AG04449 (cell line): ENCODE measurements at regions of chr1 and their contacts with region 1.

Region 1: GRCh38 chr1:218330043-218330623 is 15.0 kb upstream of the TGFB2 start:
- DNase-seq: no peak
- H3K4me3 ChIP-seq: no peak overlapping the region
- CTCF ChIP-seq: peak; percentile 22

Region 2: DNA sequence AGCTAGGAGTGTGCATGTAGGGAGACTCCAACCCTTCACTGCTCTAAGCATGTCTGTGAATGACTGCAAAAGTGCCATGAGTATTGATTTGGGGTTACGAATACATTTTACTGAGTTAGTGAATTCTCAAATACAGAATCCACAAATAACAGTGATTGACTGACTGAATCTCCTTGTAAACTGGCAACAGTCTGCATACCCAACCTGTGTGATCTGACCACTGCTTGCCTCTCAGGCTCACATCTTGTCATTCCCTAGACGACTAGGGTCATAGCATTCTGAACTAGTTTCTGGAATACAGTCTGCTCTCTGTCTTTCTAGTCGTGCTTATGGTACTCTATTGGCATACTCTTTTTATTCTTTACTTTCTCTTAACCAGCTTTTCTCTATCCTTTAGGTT is 37.6 kb before region 1 on chr1:
- CTCF ChIA-PET with region 1: no interaction called
- POLR2A ChIA-PET with region 1: no interaction called
- DNase-seq: no peak
- H3K4me3 ChIP-seq: no peak overlapping the region
- CTCF ChIP-seq: no peak

Region 3: DNA sequence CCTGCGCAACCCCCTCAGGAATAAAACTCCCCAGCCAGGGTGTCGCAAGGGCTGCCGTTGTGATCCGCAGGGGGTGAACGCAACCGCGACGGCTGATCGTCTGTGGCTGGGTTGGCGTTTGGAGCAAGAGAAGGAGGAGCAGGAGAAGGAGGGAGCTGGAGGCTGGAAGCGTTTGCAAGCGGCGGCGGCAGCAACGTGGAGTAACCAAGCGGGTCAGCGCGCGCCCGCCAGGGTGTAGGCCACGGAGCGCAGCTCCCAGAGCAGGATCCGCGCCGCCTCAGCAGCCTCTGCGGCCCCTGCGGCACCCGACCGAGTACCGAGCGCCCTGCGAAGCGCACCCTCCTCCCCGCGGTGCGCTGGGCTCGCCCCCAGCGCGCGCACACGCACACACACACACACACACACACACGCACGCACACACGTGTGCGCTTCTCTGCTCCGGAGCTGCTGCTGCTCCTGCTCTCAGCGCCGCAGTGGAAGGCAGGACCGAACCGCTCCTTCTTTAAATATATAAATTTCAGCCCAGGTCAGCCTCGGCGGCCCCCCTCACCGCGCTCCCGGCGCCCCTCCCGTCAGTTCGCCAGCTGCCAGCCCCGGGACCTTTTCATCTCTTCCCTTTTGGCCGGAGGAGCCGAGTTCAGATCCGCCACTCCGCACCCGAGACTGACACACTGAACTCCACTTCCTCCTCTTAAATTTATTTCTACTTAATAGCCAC is 15.7 kb after region 1 on chr1:
- CTCF ChIA-PET with region 1: interaction called, 22 read pairs
- POLR2A ChIA-PET with region 1: interaction called, 3 read pairs
- DNase-seq: no peak
- H3K4me3 ChIP-seq: peak overlapping the region; percentile 75
- CTCF ChIP-seq: no peak

Region 4: DNA sequence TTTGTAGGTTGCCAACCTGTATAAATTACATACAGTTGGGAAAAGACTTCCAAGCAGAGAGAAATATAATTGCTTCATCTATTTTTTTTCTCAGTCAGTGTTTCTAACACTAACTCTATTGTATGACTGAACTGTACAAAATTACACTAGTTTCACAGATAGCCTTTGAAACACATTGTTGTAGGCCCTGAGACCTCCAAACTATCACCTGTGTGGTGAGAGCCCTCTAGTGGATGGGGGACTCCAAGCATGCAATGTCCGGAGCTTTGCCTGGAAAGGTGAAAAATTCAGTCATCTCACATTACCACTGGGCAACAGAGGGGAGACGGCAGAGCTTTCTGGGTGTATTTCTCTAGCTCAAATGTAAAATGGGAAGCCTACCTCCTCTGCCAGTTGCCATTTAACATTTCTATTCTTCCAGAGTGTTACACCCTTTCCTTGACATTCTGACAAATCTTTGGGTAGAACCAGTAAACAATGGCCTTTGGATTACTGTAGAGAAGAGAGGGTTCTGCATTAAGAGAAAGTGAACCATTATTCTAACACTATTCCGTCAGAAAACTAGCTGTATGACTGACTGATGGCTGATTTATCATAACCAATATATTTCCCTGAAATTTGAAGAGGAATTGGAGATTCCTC is 1055.8 kb after region 1 on chr1:
- CTCF ChIA-PET with region 1: interaction called, 13 read pairs
- POLR2A ChIA-PET with region 1: no interaction called
- DNase-seq: no peak
- H3K4me3 ChIP-seq: no peak overlapping the region
- CTCF ChIP-seq: peak; percentile 78

Region 5: GRCh38 chr1:219416594-219417238 is 1086.6 kb after region 1 on chr1:
- CTCF ChIA-PET with region 1: interaction called, 14 read pairs
- POLR2A ChIA-PET with region 1: no interaction called
- DNase-seq: no peak
- H3K4me3 ChIP-seq: no peak overlapping the region
- CTCF ChIP-seq: peak; percentile 62

Region 6: GRCh38 chr1:219566951-219567947 is 1237.1 kb after region 1 on chr1:
- CTCF ChIA-PET with region 1: interaction called, 28 read pairs
- POLR2A ChIA-PET with region 1: no interaction called
- DNase-seq: no peak
- H3K4me3 ChIP-seq: no peak overlapping the region
- CTCF ChIP-seq: peak; percentile 62

Region 7: DNA sequence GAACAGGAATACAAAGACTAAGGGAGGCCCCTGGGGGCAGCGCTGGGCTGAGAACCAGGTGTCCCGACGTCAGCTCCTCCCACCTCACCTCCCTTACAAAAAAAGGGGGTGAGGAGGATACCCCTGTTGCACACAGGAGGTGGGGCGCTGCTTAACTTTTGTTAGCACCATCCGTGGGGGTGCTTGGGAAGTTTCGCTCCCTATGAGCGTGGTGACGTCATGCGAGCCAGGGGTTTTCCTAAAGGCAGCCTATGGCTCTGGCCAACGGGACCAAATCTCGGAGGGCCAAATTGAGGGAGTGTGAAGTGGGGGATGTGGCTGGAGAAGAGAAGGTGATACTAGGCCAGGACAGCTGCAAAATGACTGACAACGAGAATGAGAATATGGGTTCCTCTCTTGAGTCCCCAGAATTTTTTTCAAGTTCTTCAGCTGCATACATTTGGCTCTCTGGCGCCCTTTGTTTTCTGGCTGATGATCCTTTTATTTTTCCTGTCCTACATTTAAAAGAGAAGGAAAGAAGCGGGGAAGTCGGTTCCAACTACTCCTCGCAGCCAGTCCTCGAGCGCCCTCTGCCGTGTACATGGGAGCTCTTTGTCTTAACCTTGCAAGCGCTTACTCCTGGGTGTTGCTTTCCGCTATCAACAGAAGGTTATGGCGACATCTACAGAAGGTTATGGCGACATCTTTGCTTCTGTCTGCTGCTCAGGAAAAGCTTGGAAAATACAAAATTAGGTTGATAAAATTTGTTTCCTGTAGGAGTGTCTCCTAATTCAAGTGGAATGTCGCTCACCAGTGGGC is 1330.7 kb after region 1 on chr1:
- CTCF ChIA-PET with region 1: interaction called, 16 read pairs
- POLR2A ChIA-PET with region 1: no interaction called
- DNase-seq: peak; percentile 47
- H3K4me3 ChIP-seq: peak overlapping the region; percentile 26
- CTCF ChIP-seq: peak; percentile 82

Region 8: DNA sequence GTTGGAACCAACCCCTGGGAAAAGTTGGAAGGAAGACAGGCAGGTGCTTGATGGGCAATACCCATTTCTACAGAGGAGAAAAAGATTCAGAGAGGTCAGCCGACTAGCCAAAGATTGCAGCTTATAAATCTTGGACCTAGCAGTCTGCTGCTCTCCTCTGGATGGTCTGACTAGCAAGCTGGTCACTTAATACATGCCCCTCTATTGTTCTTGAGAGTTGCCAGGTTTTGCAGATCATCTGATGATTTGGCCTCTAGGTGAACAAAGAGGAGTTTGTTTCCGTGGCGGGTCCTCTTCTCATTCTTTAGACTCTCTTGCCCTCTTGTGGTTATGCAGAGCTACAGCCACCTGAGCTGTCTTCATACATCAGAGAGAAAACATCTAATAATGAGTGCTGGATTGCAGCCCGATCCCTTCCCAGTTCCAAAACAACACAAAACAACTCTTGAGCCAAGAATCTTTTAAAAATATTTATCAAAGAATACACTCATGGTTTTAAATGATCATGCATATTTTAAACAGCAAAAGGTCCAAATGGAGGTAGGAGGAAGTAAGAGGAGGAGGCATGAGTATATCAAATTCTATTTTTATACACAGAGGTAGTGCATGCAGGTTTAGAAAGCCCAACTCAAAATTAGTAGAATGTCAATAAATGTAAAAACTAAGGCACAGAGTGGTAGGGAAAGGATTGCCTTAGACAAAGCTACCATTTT is 1482.5 kb after region 1 on chr1:
- CTCF ChIA-PET with region 1: interaction called, 20 read pairs
- POLR2A ChIA-PET with region 1: no interaction called
- DNase-seq: peak; percentile 17
- H3K4me3 ChIP-seq: no peak overlapping the region
- CTCF ChIP-seq: peak; percentile 76